Right cardiac atrium (tissue), 5 donors: ENCODE measurements at regions of chr16 and their contacts with region 1.

Region 1: DNA sequence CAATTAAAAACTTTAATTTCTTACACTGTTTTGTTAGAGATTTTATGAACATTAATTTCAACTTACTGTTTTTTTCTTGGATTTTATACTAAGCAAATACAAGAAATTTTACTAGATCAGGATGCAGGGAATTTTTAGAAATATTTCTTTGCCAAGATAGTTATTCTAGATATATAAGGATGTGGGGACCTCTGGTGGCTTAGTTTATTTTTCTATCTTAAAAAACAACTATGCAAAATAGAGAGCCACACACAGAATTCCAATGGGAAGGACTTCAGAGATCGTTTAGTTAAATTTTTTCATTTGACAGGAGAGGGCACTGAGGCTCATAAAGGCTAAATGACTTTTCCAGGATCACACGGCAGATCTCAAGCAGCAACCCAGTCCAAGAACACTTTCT is 23.0 kb upstream of the CAPNS2 start:
- DNase-seq: no peak
- ATAC-seq: peak in 1 of 2 donors; percentile 40
- H3K4me3 ChIP-seq: no peak overlapping the region
- H3K27ac ChIP-seq: no peak overlapping the region
- H3K4me1 ChIP-seq: no peaks in the 10 kb centered on the region
- H3K27me3 ChIP-seq: no peaks in the 10 kb centered on the region

Region 2: DNA sequence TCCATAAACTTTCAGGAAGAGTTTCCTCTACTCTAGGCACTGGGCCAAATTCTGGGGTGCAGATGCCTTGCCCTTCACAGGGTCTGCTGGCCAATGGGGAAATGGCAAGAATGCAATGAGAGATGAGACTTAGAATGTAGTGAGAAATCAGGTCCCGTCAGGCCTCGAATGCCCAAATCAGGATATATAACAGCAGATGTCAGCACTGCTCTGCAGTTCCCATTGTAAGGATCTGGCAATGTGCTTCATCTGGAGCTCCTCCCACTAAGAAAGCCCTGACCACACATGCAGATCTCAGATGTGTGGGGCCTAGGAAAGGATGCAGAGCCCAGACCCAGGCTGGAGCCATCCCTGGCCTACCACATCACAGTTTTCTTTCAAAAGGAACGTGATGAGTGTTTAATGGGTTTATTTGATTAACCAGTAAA is 48.5 kb before region 1 on chr16:
- intact Hi-C with region 1: loop called in 1 of 4 experiments (anchors 5 kb)
- DNase-seq: peak in 1 of 3 donors; percentile 62
- ATAC-seq: peak; percentile 86
- H3K4me3 ChIP-seq: no peak overlapping the region
- H3K27ac ChIP-seq: no peak overlapping the region
- H3K4me1 ChIP-seq: peaks cover 2% of the 10 kb centered on the region
- H3K27me3 ChIP-seq: no peaks in the 10 kb centered on the region

Region 3: DNA sequence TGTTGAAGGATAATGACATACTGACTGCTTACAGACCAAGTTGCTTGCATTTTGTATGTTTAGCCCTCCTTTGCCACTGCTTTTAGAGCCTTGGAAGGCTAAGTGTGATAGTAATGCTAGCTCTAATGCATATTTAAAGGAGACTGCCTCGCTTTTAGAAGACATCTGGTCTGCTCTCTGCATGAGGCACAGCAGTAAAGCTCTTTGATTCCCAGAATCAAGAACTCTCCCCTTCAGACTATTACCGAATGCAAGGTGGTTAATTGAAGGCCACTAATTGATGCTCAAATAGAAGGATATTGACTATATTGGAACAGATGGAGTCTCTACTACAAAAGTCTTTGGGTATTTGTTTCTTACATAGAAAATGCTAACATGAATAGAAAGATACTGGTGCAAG is 42.2 kb after region 1 on chr16:
- intact Hi-C with region 1: no loop called
- DNase-seq: no peak
- ATAC-seq: no peak
- H3K4me3 ChIP-seq: no peak overlapping the region
- H3K27ac ChIP-seq: no peak overlapping the region
- H3K4me1 ChIP-seq: no peaks in the 10 kb centered on the region
- H3K27me3 ChIP-seq: no peaks in the 10 kb centered on the region

Region 4: GRCh38 chr16:55701442-55702319 is 158.2 kb after region 1 on chr16:
- intact Hi-C with region 1: loop called in 3 of 4 experiments (anchors 5 to 10 kb)
- DNase-seq: peak; percentile 66 to 81 (median 79)
- ATAC-seq: peak; percentile 38 to 68
- H3K4me3 ChIP-seq: no peak overlapping the region
- H3K27ac ChIP-seq: no peak overlapping the region
- H3K4me1 ChIP-seq: no peaks in the 10 kb centered on the region
- H3K27me3 ChIP-seq: no peaks in the 10 kb centered on the region